ENCODE measurements at regions of chr19 and their contacts with region 1.

Region 1: GRCh38 chr19:48279747-48280146 is 9.9 kb downstream of the ZNF114 start:
- DNase-seq: no peak
- H3K4me3 ChIP-seq: no peak overlapping the region
- H3K27ac ChIP-seq: no peak overlapping the region
- H3K4me1 ChIP-seq: no peaks in the 10 kb centered on the region
- H3K27me3 ChIP-seq: no peaks in the 10 kb centered on the region
- CTCF ChIP-seq: no peak
- EP300 ChIP-seq: no peak
- POLR2A ChIP-seq: no peak
- RAD21 ChIP-seq: no peak

Region 2: GRCh38 chr19:48290771-48291488 is 11.2 kb after region 1 on chr19:
- CTCF ChIA-PET with region 1: interaction called, 212 read pairs
- POLR2A ChIA-PET with region 1: interaction called, 35 read pairs
- DNase-seq: peak; percentile 81 to 95
- H3K4me3 ChIP-seq: peak overlapping the region; percentile 28 to 61 (median 51); a peak in 7 of 8 replicates
- H3K27ac ChIP-seq: peak overlapping the region; percentile 33; the same call in 1 of the 2 replicates
- H3K4me1 ChIP-seq: peaks cover 0 to 12% (median 4%) of the 10 kb centered on the region in 4 experiments; a peak in 4 of 7 replicates
- H3K27me3 ChIP-seq: no peaks in the 10 kb centered on the region
- CTCF ChIP-seq: peak; percentile 93 to 98 (median 95)
- EP300 ChIP-seq: no peak
- POLR2A ChIP-seq: peak in 1 of 2 experiments; percentile 44; a peak in 1 of 3 replicates
- RAD21 ChIP-seq: peak; percentile 75 to 82

Region 3: DNA sequence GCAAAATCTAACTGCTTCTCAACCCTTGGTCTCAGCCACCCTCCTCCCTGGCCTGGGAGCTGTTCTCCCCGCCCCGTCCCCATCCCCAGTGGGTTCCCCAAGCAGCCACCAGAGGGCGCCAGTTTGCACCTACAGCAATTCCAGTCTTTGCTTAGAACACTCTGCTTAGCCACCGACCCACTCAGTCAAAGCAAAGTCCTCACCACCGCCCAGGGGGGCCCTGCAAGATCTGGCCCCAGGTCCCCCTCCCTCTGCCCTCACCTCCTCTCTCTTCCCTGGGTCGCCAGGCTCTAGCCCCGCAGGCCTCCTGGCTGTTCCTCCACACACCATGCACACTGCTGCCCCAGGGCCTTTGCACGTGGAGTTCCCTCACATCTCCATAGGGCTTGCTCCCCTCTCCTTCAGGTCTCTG is 71.6 kb after region 1 on chr19:
- CTCF ChIA-PET with region 1: no interaction called
- POLR2A ChIA-PET with region 1: no interaction called
- DNase-seq: peak in 1 of 2 experiments; percentile 97
- H3K4me3 ChIP-seq: no peak overlapping the region
- H3K27ac ChIP-seq: no peak overlapping the region
- H3K4me1 ChIP-seq: no peaks in the 10 kb centered on the region
- H3K27me3 ChIP-seq: no peaks in the 10 kb centered on the region
- CTCF ChIP-seq: peak; percentile 84 to 98 (median 93)
- EP300 ChIP-seq: no peak
- POLR2A ChIP-seq: no peak
- RAD21 ChIP-seq: peak; percentile 66 to 72